CD14-positive monocyte (primary cell): ENCODE measurements at regions of chr18 and their contacts with region 1.

Region 1: GRCh38 chr18:79834834-79835233 is 37.1 kb downstream of the KCNG2 start:
- DNase-seq: no peak
- H3K4me3 ChIP-seq: no peak overlapping the region
- H3K4me3 Mint-ChIP-seq: no peak overlapping the region
- H3K27ac ChIP-seq: no peak overlapping the region
- H3K27ac Mint-ChIP-seq: no peak overlapping the region
- H3K4me1 ChIP-seq: no peaks in the 10 kb centered on the region
- H3K4me1 Mint-ChIP-seq: peaks cover 3% of the 10 kb centered on the region
- H3K27me3 ChIP-seq: no peaks in the 10 kb centered on the region
- H3K27me3 Mint-ChIP-seq: peaks cover 0 to 2% (median 0%) of the 10 kb centered on the region in 3 donors
- CTCF ChIP-seq: no peak

Region 2: DNA sequence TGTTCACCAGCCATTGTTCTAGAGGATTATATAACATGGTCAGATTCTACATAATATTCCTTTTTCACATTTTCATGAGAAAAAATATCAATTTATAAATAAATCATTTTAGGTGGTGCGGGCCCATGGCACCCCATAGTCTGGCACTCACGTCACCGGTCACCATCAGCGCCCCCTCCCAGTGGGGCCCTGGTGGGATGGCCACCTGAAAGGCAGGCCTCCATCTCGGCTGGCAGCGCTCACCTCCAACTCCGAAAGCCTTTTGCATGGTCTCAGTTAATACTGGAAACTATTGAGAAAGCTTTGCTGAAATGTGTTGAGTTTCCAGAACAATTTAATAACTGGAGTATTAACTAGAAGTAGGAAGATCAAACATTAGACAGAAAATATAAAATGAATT is 996.7 kb before region 1 on chr18:
- intact Hi-C with region 1: no loop called
- DNase-seq: no peak
- H3K4me3 ChIP-seq: no peak overlapping the region
- H3K4me3 Mint-ChIP-seq: no peak overlapping the region
- H3K27ac ChIP-seq: no peak overlapping the region
- H3K27ac Mint-ChIP-seq: no peak overlapping the region
- H3K4me1 ChIP-seq: no peaks in the 10 kb centered on the region
- H3K4me1 Mint-ChIP-seq: no peaks in the 10 kb centered on the region
- H3K27me3 ChIP-seq: no peaks in the 10 kb centered on the region
- H3K27me3 Mint-ChIP-seq: no peaks in the 10 kb centered on the region
- CTCF ChIP-seq: no peak

Region 3: GRCh38 chr18:79769698-79770500 is 64.9 kb before region 1 on chr18:
- intact Hi-C with region 1: loop called in 1 of 2 experiments (anchors 10 kb)
- DNase-seq: no peak
- H3K4me3 ChIP-seq: no peak overlapping the region
- H3K4me3 Mint-ChIP-seq: no peak overlapping the region
- H3K27ac ChIP-seq: no peak overlapping the region
- H3K27ac Mint-ChIP-seq: no peak overlapping the region
- H3K4me1 ChIP-seq: no peaks in the 10 kb centered on the region
- H3K4me1 Mint-ChIP-seq: no peaks in the 10 kb centered on the region
- H3K27me3 ChIP-seq: no peaks in the 10 kb centered on the region
- H3K27me3 Mint-ChIP-seq: peaks cover 3 to 8% (median 4%) of the 10 kb centered on the region in 3 donors
- CTCF ChIP-seq: no peak

Region 4: DNA sequence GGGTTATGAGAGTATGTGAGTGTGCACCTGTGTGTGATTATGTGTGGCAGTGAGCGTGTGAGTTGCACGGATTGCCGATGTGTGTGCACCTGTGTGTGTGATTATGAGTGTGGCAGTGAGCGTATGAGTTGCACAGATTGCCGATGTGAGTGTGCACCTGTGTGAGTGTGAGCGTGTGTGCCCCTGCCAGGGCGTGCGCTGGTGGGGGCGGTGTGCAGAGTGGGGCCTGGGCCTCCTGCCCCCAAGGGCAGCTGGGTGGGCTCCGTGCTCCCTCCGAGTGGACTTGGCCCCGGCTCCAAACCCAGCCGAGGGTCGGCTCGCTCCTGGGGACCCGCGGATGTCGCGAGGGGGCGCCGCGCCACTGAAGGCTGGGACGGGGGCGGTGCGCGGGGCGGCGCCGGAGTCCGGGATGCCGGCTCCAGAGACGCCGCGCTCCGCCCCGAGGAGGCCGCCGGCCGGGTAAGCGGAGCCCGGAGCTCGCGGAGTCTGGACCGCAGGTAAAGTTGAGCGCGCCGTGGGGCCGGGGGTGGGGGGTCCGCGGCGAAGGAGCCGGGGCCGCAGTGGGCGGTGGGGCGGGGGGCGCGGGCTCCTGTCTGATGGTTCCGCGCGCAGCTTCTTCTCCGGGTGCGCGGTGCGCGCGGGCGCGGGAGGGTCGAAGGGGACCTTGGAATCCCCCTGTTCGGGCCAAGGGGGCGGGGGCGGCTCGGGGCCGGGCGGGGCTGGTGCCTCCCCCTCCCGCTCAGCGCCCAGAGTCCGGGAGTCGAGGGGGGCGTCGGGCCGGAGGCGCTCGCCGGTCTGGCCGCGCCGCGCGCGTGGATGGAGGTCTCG is 37.1 kb before region 1 on chr18 and contains the start of gene KCNG2:
- intact Hi-C with region 1: loop called in 1 of 2 experiments (anchors 5 kb)
- DNase-seq: no peak
- H3K4me3 ChIP-seq: peak within 1 kb of the TSS; percentile 3 to 62 (median 26)
- H3K4me3 Mint-ChIP-seq: peak within 1 kb of the TSS; percentile 66 to 91
- H3K27ac ChIP-seq: no peak within 1 kb of the TSS
- H3K27ac Mint-ChIP-seq: no peak within 1 kb of the TSS
- H3K4me1 ChIP-seq: peaks cover 52 to 66% of the 10 kb centered on the region in 2 donors
- H3K4me1 Mint-ChIP-seq: peaks cover 54% of the 10 kb centered on the region
- H3K27me3 ChIP-seq: peaks cover 22 to 40% of the 10 kb centered on the region in 2 donors
- H3K27me3 Mint-ChIP-seq: peaks cover 38 to 49% (median 45%) of the 10 kb centered on the region in 3 donors
- CTCF ChIP-seq: no peak
- polyA plus RNA-seq, gene KCNG2: 0.04 TPM in 1 of 3 donors, not detected in the others